Caco-2 (cell line): ENCODE measurements at regions of chr9 and their contacts with region 1.

Region 1: DNA sequence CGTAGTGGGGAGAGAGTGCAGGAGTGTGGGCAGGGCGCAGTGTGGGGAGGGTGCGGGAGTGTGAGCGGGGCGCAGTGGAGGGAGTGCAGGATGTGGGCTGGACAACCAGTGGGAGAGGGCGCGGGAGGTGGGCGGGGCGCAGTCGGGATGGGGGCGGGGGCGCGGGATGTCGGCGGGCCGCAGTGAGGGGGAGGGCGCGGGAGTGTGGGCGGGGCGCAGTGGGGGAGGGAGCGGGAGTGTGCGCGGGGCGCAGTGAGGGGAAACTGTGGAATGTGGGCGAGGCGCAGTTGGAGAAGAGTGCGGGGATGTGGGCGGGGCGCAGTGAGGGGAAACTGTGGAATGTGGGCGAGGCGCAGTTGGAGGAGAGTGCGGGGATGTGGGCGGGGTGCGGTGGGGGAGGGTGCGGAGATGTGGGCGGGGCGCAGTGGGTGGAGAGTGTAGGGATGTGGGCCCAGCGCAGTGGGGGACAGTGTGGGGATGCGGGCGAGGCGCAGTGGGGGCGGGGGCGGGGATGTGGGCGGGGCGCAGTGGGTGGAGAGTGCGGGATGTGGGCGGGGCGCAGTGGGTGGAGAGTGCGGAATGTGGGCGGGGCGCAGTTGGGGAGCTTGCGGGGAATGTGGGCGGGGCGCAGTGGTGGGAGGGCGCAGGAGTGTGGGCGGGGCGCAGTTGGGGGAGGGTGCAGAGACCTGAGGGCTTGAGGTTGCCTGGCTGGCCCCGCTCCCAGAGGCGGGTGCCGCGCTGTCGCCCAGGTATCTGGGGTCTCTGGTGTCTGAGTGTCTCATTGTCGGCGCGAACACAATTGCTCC is at the start of gene NXNL2:
- DNase-seq: peak; percentile 86 to 91
- H3K4me3 ChIP-seq: peak within 1 kb of the TSS; percentile 65
- H3K4me3 Mint-ChIP-seq: peak within 1 kb of the TSS; percentile 80
- H3K27ac Mint-ChIP-seq: peak within 1 kb of the TSS; percentile 63
- H3K4me1 ChIP-seq: peaks cover 9% of the 10 kb centered on the region; the same call in 1 of the 2 replicates
- H3K4me1 Mint-ChIP-seq: peaks cover 12% of the 10 kb centered on the region
- H3K27me3 ChIP-seq: no peaks in the 10 kb centered on the region
- H3K27me3 Mint-ChIP-seq: no peaks in the 10 kb centered on the region
- CTCF ChIP-seq: no peak
- total RNA-seq, gene NXNL2: 0.52 and 0.60 TPM in 2 replicates

Region 2: GRCh38 chr9:88481933-88482332 is 52.7 kb before region 1 on chr9:
- CTCF ChIA-PET with region 1: no interaction called
- POLR2A ChIA-PET with region 1: no interaction called
- intact Hi-C with region 1: loop called (anchors 10 kb)
- DNase-seq: no peak
- H3K4me3 ChIP-seq: no peak overlapping the region
- H3K4me3 Mint-ChIP-seq: no peak overlapping the region
- H3K27ac Mint-ChIP-seq: no peak overlapping the region
- H3K4me1 ChIP-seq: no peaks in the 10 kb centered on the region
- H3K4me1 Mint-ChIP-seq: no peaks in the 10 kb centered on the region
- H3K27me3 ChIP-seq: no peaks in the 10 kb centered on the region
- H3K27me3 Mint-ChIP-seq: no peaks in the 10 kb centered on the region
- CTCF ChIP-seq: no peak